ENCODE measurements at regions of chr17 and their contacts with region 1.

Region 1: GRCh38 chr17:7219812-7220581 is at the starts of genes ACADVL and DLG4:
- DNase-seq: peak; percentile 89 to 92
- ATAC-seq: peak; percentile 71 to 77
- H3K4me3 ChIP-seq: peak within 1 kb of the TSS; percentile 75 to 90 (median 84)
- H3K27ac ChIP-seq: peak within 1 kb of the TSS; percentile 91 to 99 (median 96)
- H3K4me1 ChIP-seq: peaks cover 58 to 70% of the 10 kb centered on the region in 2 donors
- H3K27me3 ChIP-seq: no peaks in the 10 kb centered on the region
- CTCF ChIP-seq: no peak
- POLR2A ChIP-seq: peak; percentile 94 to 95
- total RNA-seq, gene ACADVL: 771 to 1,217 (median 1,086) TPM
- total RNA-seq, gene DLG4: 3.5 to 6.7 (median 5.3) TPM

Region 2: DNA sequence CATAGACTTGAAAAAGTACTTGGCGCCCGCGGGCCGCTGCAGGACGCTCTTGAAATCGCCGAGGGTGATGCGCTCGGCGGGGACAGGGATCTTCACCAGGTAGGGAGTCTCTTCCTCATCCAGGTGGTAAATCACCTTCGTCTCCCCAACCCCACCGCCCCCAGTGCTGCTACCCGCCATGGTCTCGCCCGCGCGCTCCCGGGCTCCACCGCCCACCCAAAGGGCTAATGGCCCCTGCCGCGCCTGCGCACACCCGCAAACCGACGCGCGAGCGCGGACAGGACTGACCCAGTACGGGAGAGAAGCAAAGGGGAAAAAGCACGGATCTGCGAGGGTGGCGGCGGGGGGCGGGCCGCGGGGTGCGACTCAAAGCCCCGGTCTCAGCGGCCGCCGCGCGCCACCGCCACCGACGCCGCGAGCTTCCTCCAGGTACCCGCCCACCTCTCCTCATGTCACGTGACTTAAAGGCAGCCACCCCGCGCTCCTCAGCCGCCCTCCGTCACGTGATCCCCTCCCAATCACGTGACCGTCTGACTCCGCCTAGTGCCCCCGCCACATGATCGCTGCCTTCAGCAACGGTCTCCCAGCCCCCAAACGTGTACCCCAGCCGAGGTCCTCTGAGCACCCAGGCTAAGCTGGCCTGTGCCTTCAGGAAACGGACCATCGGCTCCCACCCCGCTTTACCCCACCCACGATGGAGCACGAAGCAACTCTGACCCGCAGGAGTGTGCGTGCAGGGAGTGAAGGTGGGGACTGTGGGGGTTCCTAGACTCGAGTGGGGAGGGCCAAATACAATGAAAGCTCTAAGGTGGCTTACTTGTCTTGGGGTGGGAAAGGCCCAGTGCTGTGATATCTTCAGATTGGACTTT is 14.3 kb after region 1 on chr17 and contains the start of gene DVL2:
- in situ Hi-C with region 1: no loop called
- intact Hi-C with region 1: loop called (anchors 2 kb)
- DNase-seq: peak; percentile 93 to 96
- ATAC-seq: peak; percentile 59 to 70
- H3K4me3 ChIP-seq: peak within 1 kb of the TSS; percentile 81 to 99 (median 88)
- H3K27ac ChIP-seq: peak within 1 kb of the TSS; percentile 88 to 99 (median 95)
- H3K4me1 ChIP-seq: peaks cover 29 to 44% of the 10 kb centered on the region in 2 donors
- H3K27me3 ChIP-seq: no peaks in the 10 kb centered on the region
- CTCF ChIP-seq: peak in 3 of 5 experiments; percentile 4 to 88 (median 77)
- POLR2A ChIP-seq: peak; percentile 81 to 88
- total RNA-seq, gene DVL2: 15.5 to 22.6 (median 20.5) TPM

Region 3: GRCh38 chr17:7296189-7296902 is 76.3 kb after region 1 on chr17:
- in situ Hi-C with region 1: no loop called
- intact Hi-C with region 1: loop called (anchors 1 kb)
- DNase-seq: peak; percentile 85 to 91
- ATAC-seq: peak; percentile 55 to 58
- H3K4me3 ChIP-seq: peak overlapping the region; percentile 25 to 30 (median 28)
- H3K27ac ChIP-seq: peak overlapping the region; percentile 95 to 100 (median 98)
- H3K4me1 ChIP-seq: peaks cover 45 to 46% of the 10 kb centered on the region in 2 donors
- H3K27me3 ChIP-seq: no peaks in the 10 kb centered on the region
- CTCF ChIP-seq: peak; percentile 91 to 100 (median 99)
- POLR2A ChIP-seq: peak; percentile 74 to 80

Measured in gastrocnemius medialis (tissue), 4 donors.